Left lung (tissue), 14 donors: ENCODE measurements at regions of chr12 and their contacts with region 1.

Region 1: GRCh38 chr12:93256256-93256969 is 121.3 kb upstream of the NUDT4 start:
- DNase-seq: no peak
- ATAC-seq: no peak
- H3K4me3 ChIP-seq: no peak overlapping the region
- H3K27ac ChIP-seq: no peak overlapping the region
- H3K4me1 ChIP-seq: no peaks in the 10 kb centered on the region
- H3K27me3 ChIP-seq: no peaks in the 10 kb centered on the region
- CTCF ChIP-seq: no peak

Region 2: DNA sequence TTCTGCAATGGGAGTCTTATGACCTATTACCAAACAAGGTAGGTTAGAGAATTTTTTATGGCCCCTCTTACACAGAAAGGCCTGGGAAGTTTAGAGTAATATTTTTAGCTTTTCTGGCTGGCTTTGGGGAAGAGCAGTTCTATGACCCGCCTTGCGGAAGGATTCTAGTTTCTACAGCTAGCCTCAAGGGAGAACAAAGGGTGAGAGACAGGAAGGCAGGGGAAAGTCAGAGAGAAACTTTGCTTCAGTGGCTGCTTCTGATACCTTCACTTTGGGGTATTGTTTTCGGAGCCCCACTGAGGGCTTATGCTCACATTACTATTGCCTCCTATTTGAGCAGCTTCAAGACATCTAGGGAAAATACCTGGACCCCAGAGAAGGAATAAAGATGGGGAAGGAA is 40.6 kb after region 1 on chr12:
- intact Hi-C with region 1: no loop called
- DNase-seq: no peak
- ATAC-seq: no peak
- H3K4me3 ChIP-seq: no peak overlapping the region
- H3K27ac ChIP-seq: no peak overlapping the region
- H3K4me1 ChIP-seq: no peaks in the 10 kb centered on the region
- H3K27me3 ChIP-seq: no peaks in the 10 kb centered on the region
- CTCF ChIP-seq: no peak

Region 3: DNA sequence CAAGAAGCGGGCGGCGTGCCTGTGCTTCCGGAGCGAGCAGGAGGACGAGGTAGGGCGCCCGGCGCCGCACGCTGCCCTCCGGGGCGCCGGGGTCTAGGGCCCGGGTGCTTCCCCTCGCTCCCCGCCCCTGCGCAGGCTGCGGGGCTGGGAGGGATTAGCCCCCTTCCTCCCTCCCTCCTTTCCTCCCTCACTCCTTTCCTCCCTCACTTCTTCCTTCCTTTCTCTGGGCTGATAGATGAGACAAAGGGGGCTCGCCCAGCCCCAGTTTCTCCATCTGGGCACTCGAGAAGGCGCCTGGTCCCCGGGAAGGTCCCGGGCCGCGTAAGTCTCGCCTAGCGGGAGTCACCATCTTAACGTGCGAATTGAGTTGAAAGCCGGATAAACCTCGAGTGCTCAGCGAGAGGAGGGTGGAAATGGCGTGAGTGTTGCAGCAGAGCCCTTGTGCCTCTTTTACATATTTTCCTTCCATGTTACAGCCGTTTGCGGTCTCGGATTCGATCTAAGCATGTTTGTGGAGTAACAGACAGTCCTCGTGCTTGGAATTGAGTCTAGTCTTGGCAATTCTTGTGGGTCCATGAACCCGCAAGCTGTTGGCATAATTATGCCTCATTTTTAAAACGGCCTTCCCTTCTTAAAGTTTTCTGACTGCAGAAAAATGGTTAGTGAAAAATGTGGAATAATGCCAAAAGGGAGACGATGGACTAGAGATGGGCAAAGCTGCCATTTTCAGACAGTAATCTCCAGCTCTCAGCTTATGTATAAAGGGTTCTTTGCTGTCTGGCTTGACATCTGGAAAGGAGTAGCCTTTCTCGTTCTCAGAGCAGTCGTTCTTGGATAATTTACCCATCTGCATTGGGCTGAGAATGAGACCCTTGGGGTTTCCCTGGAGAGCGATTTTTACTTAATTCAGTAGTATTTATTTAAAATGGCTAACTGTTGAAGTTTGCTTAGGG is 122.2 kb after region 1 on chr12:
- intact Hi-C with region 1: loop called in 1 of 2 experiments (anchors 10 kb)
- DNase-seq: peak; percentile 61 to 86 (median 72)
- ATAC-seq: peak; percentile 13
- H3K4me3 ChIP-seq: peak overlapping the region; percentile 68 to 79
- H3K27ac ChIP-seq: peak overlapping the region; percentile 87 to 95
- H3K4me1 ChIP-seq: peaks cover 11 to 61% of the 10 kb centered on the region in 2 donors
- H3K27me3 ChIP-seq: no peaks in the 10 kb centered on the region
- CTCF ChIP-seq: no peak

Region 4: DNA sequence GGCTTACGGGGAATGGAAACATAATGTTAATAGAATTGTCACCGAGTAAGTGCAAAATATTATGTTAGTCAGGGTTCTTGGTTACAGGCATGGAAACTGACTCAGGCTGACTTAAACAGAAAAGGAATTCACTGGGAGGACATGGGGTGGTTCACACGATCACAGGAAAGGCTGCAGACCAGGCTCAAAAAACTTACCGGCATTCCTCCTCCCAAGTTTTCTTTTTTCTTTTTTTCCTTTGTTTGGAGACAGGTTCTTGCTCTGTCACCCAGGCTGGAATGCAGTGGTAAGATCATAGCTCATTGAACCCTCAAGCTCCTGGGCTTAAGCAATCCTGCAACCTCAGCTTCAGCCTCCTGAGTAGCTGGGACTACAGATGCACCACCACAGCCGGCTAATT is 197.2 kb after region 1 on chr12:
- intact Hi-C with region 1: no loop called
- DNase-seq: no peak
- ATAC-seq: no peak
- H3K4me3 ChIP-seq: no peak overlapping the region
- H3K27ac ChIP-seq: no peak overlapping the region
- H3K4me1 ChIP-seq: no peaks in the 10 kb centered on the region
- H3K27me3 ChIP-seq: no peaks in the 10 kb centered on the region
- CTCF ChIP-seq: no peak